ENCODE measurements at regions of chr11 and their contacts with region 1.

Region 1: DNA sequence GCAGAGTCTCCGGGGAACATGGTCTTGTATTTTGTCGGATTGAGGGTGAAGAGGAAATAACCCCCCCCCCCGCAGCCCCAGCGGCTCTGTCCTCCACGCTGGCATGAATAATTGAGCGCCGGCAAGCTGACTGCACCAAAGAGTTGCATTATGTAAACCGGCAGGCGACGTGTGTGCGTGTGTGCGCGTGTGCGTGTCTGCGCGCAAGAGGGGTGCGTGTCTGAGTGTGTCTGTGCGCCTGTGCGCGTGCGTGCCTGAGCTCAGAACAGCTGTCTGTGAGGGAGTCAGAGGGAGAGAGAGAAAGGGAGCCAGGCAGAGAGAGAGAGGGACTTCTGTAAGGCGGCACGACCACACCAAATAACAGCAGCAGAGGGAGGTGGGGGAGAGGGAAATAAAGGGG is 94.4 kb downstream of the SCN3B start:
- DNase-seq: no peak
- H3K4me3 ChIP-seq: peak overlapping the region in 2 of 4 experiments; percentile 9 to 34; a peak in 2 of 8 replicates
- H3K27ac ChIP-seq: no peak overlapping the region
- H3K4me1 ChIP-seq: peaks cover 8 to 22% (median 16%) of the 10 kb centered on the region in 4 experiments
- H3K27me3 ChIP-seq: no peaks in the 10 kb centered on the region
- CTCF ChIP-seq: no peak
- EP300 ChIP-seq: no peak
- POLR2A ChIP-seq: no peak
- RAD21 ChIP-seq: no peak

Region 2: DNA sequence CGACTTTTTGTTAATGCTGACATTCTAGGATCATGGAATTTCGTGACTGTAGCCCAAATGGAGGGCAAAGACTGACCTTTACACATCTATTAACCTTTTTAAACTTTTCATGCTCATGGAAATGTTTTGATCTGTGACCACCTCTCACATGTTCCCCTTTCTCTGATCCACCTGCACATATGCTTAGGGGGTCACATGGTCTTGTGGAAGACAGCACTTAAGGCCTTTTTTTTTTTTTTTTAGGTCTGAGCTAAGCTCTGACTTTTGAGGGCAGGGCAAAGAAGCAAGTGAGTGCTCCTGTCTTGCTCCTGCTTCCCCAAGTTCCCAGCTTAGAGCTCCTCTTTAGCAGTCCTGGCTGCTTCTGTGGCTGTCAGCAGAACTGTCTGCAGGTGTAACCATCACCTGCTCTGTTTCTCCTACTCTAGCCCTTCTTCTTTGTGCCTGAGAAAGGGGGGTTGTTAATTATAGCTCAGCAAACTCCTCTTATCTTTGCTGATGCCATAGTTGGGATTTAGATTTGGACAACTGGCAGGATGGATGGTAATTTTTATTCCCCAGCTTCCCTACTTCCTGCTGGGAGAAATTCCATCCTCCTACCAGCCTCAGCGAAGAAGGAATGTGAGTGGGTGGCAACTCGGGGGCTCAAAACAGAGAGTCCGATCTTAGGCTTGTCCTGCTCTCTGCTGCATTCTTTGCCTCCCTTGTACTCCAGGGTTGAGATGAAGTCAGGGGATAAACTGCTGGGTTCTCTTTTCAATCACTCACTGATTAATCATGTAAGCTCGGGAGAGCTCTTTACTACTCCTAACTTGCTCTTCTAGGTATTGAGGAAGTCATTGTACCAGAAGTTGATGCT is 65.6 kb before region 1 on chr11:
- CTCF ChIA-PET with region 1: interaction called, 10 read pairs
- POLR2A ChIA-PET with region 1: no interaction called
- DNase-seq: no peak
- H3K4me3 ChIP-seq: peak overlapping the region in 1 of 4 experiments; percentile 4; a peak in 2 of 8 replicates
- H3K27ac ChIP-seq: no peak overlapping the region
- H3K4me1 ChIP-seq: peaks cover 7 to 24% (median 16%) of the 10 kb centered on the region in 4 experiments
- H3K27me3 ChIP-seq: no peaks in the 10 kb centered on the region
- CTCF ChIP-seq: no peak
- EP300 ChIP-seq: 0 out of 3 replicates have a peak, but pooled peaks of 1 of the 2 experiments have one; percentile 41
- POLR2A ChIP-seq: no peak
- RAD21 ChIP-seq: no peak

Region 3: GRCh38 chr11:123511037-123511870 is 48.8 kb before region 1 on chr11:
- CTCF ChIA-PET with region 1: interaction called, 115 read pairs
- POLR2A ChIA-PET with region 1: interaction called, 4 read pairs
- DNase-seq: peak; percentile 80 to 92
- H3K4me3 ChIP-seq: no peak overlapping the region
- H3K27ac ChIP-seq: no peak overlapping the region
- H3K4me1 ChIP-seq: peaks cover 3 to 16% (median 10%) of the 10 kb centered on the region in 4 experiments
- H3K27me3 ChIP-seq: no peaks in the 10 kb centered on the region
- CTCF ChIP-seq: peak; percentile 80 to 89 (median 84)
- EP300 ChIP-seq: no peak
- POLR2A ChIP-seq: no peak
- RAD21 ChIP-seq: peak; percentile 83 to 86

Region 4: DNA sequence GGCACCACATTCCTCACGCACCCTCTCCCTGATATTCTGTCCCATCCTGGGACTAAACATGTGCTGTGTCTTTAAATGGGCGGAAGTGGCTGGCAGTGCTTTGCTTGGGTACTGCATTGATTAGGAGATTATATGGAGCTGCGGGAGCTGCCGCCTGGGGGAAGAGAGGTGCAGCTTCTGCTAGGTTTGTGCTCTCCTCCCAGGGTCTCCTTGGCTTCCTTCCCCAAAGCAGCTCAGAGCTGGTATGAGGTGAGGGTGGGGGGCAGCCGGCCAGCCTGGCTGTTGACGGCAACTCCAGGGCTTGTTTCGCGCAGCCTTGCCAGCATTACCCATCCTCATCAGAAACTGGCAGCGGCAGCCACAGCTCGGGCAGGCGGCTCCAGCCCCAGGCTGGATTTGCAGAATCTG is 34.5 kb before region 1 on chr11:
- CTCF ChIA-PET with region 1: interaction called, 33 read pairs
- POLR2A ChIA-PET with region 1: interaction called, 3 read pairs
- DNase-seq: no peak
- H3K4me3 ChIP-seq: no peak overlapping the region
- H3K27ac ChIP-seq: no peak overlapping the region
- H3K4me1 ChIP-seq: peaks cover 9 to 21% (median 14%) of the 10 kb centered on the region in 4 experiments; a peak in 6 of 7 replicates
- H3K27me3 ChIP-seq: no peaks in the 10 kb centered on the region
- CTCF ChIP-seq: no peak
- EP300 ChIP-seq: no peak
- POLR2A ChIP-seq: no peak
- RAD21 ChIP-seq: no peak

Region 5: DNA sequence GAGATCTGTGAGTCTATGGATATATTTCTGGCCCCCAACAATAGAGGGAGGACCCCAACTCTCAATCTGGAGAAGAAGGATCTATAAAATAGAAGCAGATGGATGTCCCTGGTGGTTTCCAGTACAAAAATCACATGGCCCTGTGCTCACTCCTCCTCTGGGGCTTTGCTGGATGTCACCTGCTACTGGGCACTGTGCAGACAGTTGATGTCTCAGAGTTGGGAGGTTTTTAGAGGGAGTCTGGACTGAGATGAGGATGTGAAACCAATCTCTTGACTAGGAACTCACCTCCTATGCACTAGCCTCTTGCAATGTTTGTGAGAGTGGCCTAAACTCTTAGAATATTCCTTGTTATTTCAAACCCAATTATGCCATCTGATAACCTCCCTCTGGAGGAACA is 12.8 kb before region 1 on chr11:
- CTCF ChIA-PET with region 1: interaction called, 58 read pairs
- POLR2A ChIA-PET with region 1: interaction called, 3 read pairs
- DNase-seq: no peak
- H3K4me3 ChIP-seq: no peak overlapping the region
- H3K27ac ChIP-seq: no peak overlapping the region
- H3K4me1 ChIP-seq: peaks cover 0 to 10% (median 5%) of the 10 kb centered on the region in 4 experiments; a peak in 4 of 7 replicates
- H3K27me3 ChIP-seq: no peaks in the 10 kb centered on the region
- CTCF ChIP-seq: no peak
- EP300 ChIP-seq: no peak
- POLR2A ChIP-seq: no peak
- RAD21 ChIP-seq: no peak

Region 6: DNA sequence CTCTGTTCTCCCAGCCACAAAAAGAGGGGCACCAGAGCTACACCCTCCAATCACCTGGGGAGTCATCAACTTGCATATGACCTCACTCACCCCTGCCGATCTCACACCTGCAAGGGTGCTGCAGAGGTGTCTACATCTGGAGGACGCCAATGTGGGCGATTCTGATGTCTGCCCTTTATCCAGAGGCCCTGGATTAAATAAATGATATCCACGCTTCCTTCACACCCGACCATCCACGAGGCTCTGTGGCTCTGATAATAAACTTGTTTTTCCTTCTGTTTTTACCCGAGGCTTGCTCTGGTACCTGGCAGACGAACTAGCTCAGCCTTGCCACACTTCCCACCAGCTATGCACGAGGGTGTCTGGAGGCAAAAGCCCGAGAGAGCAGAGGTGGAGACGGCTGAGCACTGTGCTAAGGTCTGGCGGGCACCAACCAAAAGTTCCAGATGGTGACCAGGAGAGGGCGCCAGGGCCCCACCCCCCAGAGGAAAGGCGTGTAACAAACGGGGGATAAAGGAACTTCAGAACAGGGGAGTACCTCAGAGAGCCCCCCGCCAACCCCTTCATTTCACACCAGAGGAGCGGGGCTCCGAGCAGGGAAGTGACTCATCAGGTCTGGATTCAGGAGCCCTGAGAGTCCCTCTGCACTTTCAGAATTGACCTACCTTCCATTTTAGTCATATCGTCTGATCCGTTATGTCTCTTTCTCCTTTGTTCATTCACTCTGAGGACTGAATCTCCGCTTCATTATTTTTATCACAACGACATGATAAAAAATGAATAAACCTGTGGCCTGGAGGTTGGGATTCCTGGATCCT is 80.9 kb after region 1 on chr11:
- CTCF ChIA-PET with region 1: no interaction called
- POLR2A ChIA-PET with region 1: no interaction called
- DNase-seq: peak in 1 of 2 experiments; percentile 86
- H3K4me3 ChIP-seq: no peak overlapping the region
- H3K27ac ChIP-seq: no peak overlapping the region
- H3K4me1 ChIP-seq: peaks cover 0 to 4% (median 3%) of the 10 kb centered on the region in 4 experiments; a peak in 5 of 7 replicates
- H3K27me3 ChIP-seq: 0 out of 7 replicates have a peak, but pooled peaks cover 0 to 2% (median 0%) of the 10 kb centered on the region in 4 experiments
- CTCF ChIP-seq: peak; percentile 85 to 92 (median 86)
- EP300 ChIP-seq: no peak
- POLR2A ChIP-seq: no peak
- RAD21 ChIP-seq: peak; percentile 94 to 95